ENCODE measurements at regions of chr5 and their contacts with region 1.

Region 1: DNA sequence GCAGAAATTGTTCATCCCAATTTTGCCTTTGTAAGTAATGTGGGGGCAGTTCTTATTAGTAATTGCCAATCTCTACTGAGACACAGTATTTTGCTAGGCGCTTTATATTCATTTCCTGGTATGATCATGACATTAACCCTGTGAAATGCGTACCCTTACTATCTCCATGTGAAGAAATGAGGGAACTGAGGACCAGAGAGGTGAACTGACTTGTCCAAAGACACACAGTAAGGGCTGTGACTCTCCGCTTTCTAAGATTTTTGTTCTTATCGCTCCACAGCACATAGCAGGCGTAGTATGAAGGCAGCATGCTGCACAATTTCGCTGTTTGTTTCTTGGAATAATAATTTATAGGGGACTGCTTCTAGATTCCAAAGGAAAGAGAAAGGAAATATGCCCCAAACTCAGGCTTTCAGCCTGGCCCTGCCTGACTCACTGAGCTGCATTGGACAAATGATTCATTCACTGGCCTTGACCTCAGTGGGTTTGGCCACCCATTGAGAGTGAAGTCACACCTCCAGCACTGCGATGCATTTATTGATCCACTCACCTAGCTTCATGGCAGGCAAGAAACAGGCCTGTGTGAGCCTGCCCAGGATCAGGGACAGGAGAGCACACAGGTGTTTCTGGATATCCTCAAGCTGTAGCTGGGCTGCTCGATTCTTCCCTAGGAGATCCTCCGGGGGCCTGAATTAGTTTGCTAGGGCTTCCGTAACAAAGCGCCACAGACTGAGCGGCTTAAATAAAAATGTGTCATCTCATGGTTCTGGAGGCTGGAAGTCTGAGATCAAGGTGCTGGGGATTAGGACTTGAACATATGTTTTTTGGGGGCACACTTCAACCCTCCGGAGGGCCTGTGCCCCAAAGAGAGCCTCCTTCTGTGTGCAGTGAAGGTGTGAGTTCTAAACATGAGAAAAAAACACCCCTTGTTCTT is 7.2 kb upstream of the DUSP1 start:
- DNase-seq: peak; percentile 93
- ATAC-seq: peak; percentile 65
- H3K4me3 ChIP-seq: peak overlapping the region; percentile 6 to 51 (median 31); a peak in 4 of 6 replicates
- H3K27ac ChIP-seq: peak overlapping the region; percentile 88
- H3K4me1 ChIP-seq: peaks cover 100% of the 10 kb centered on the region
- H3K27me3 ChIP-seq: no peaks in the 10 kb centered on the region
- CTCF ChIP-seq: no peak
- EP300 ChIP-seq: peak; percentile 73 to 88; a peak in 3 of 4 replicates
- POLR2A ChIP-seq: peak in 1 of 2 experiments; percentile 67; a peak in 2 of 4 replicates
- RAD21 ChIP-seq: no peak

Region 2: GRCh38 chr5:172543484-172544298 is 234.5 kb before region 1 on chr5:
- CTCF ChIA-PET with region 1: no interaction called
- POLR2A ChIA-PET with region 1: no interaction called
- in situ Hi-C with region 1: no loop called
- intact Hi-C with region 1: no loop called
- DNase-seq: no peak
- ATAC-seq: no peak
- H3K4me3 ChIP-seq: no peak overlapping the region
- H3K27ac ChIP-seq: no peak overlapping the region
- H3K4me1 ChIP-seq: no peaks in the 10 kb centered on the region
- H3K27me3 ChIP-seq: peaks cover 3 to 36% of the 10 kb centered on the region in 2 experiments; a peak in 4 of 5 replicates
- CTCF ChIP-seq: no peak
- EP300 ChIP-seq: no peak
- POLR2A ChIP-seq: no peak
- RAD21 ChIP-seq: no peak

Region 3: GRCh38 chr5:172733131-172733973 is 44.8 kb before region 1 on chr5:
- CTCF ChIA-PET with region 1: no interaction called
- POLR2A ChIA-PET with region 1: interaction called, 29 read pairs
- in situ Hi-C with region 1: no loop called
- intact Hi-C with region 1: no loop called
- DNase-seq: peak; percentile 51
- ATAC-seq: peak; percentile 71
- H3K4me3 ChIP-seq: peak overlapping the region; percentile 36 to 57 (median 37); a peak in 5 of 6 replicates
- H3K27ac ChIP-seq: peak overlapping the region; percentile 17
- H3K4me1 ChIP-seq: peaks cover 88% of the 10 kb centered on the region
- H3K27me3 ChIP-seq: peaks cover 0 to 15% of the 10 kb centered on the region in 2 experiments; a peak in 3 of 5 replicates
- CTCF ChIP-seq: no peak
- EP300 ChIP-seq: no peak
- POLR2A ChIP-seq: 0 out of 4 replicates have a peak, but pooled peaks of 1 of the 2 experiments have one; percentile 21
- RAD21 ChIP-seq: no peak

Region 4: GRCh38 chr5:172795318-172795977 is 17.3 kb after region 1 on chr5:
- CTCF ChIA-PET with region 1: no interaction called
- POLR2A ChIA-PET with region 1: interaction called, 425 read pairs
- in situ Hi-C with region 1: no loop called
- intact Hi-C with region 1: no loop called
- DNase-seq: no peak
- ATAC-seq: no peak
- H3K4me3 ChIP-seq: no peak overlapping the region
- H3K27ac ChIP-seq: no peak overlapping the region
- H3K4me1 ChIP-seq: peaks cover 97% of the 10 kb centered on the region
- H3K27me3 ChIP-seq: no peaks in the 10 kb centered on the region
- CTCF ChIP-seq: no peak
- EP300 ChIP-seq: no peak
- POLR2A ChIP-seq: no peak
- RAD21 ChIP-seq: no peak

Region 5: DNA sequence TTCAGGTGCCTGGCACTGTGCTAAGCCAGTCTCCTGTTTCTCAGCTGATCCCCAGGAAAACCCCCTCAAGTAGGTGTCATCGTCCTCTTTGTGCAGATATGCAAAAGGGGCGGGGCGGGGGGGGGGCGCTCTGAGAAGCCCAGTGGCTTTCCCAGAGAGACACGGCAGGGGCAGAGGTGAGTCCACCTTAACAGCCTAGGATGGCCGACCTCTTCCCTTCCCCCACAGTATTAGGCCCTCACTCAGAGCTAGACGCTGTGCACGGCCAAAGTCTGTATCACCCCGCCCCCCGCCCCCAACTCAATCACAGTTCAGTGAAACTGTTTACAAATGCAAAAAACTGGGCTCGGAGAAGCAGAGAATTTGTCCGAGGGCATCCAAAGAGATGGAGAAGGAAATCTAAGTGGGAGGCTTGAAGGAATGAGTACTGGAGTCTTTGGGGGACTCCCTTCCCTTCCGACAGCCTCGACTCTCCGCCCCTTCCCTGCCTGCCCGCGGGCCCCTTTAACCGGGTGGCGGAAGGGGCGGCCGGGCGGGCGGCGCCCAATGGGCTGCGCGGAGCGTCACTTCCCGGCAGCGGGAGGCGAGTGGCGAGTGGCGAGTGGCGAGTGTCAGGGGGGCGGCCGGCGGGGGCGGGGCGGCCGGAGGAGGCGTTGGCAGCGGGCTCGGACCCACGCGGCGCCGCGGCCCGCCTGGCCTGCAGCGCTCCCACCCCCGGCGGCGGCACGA is 55.7 kb after region 1 on chr5 and contains the start of gene ERGIC1:
- CTCF ChIA-PET with region 1: no interaction called
- POLR2A ChIA-PET with region 1: interaction called, 50 read pairs
- in situ Hi-C with region 1: no loop called
- intact Hi-C with region 1: loop called (anchors 1 kb)
- DNase-seq: peak; percentile 64
- ATAC-seq: peak; percentile 84
- H3K4me3 ChIP-seq: peak within 1 kb of the TSS; percentile 83 to 95 (median 86)
- H3K27ac ChIP-seq: peak within 1 kb of the TSS; percentile 90
- H3K4me1 ChIP-seq: peaks cover 71% of the 10 kb centered on the region
- H3K27me3 ChIP-seq: no peaks in the 10 kb centered on the region; a peak in 1 of 5 replicates
- CTCF ChIP-seq: no peak
- EP300 ChIP-seq: 0 out of 4 replicates have a peak, but pooled peaks have one; percentile 28 to 30
- POLR2A ChIP-seq: peak; percentile 76 to 88
- RAD21 ChIP-seq: peak; percentile 44
- total RNA-seq, gene ERGIC1: 56.6 and 78.5 TPM in 2 replicates

Region 6: DNA sequence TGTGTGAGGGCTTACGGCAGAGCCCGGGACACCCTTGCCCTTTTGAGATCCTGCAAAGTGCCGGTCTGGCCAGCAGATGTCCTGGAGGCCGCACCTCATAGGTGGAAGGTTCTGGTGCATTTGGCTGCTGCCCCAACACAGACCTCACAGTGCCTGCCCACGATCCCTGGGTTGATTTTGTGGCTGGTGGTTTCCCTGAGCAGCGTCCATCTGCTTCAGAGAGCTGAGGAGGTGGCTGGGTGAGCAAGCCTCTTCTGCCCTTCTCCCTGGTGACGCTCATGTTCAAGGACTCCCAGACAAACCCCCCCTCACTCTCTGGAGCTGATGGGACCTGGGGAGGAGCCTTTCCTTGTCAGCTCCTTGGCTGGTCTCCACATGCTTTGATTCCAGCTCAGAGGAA is 385.1 kb after region 1 on chr5:
- CTCF ChIA-PET with region 1: no interaction called
- POLR2A ChIA-PET with region 1: no interaction called
- in situ Hi-C with region 1: no loop called
- intact Hi-C with region 1: no loop called
- DNase-seq: no peak
- ATAC-seq: no peak; the same call in 2 of the 3 replicates
- H3K4me3 ChIP-seq: no peak overlapping the region
- H3K27ac ChIP-seq: no peak overlapping the region
- H3K4me1 ChIP-seq: 0 out of 2 replicates have a peak, but pooled peaks cover 7% of the 10 kb centered on the region
- H3K27me3 ChIP-seq: peaks cover 2 to 3% of the 10 kb centered on the region in 2 experiments; a peak in 2 of 5 replicates
- CTCF ChIP-seq: no peak
- EP300 ChIP-seq: no peak
- POLR2A ChIP-seq: no peak
- RAD21 ChIP-seq: no peak